ENCODE measurements at regions of chr6 and their contacts with region 1.

Region 1: DNA sequence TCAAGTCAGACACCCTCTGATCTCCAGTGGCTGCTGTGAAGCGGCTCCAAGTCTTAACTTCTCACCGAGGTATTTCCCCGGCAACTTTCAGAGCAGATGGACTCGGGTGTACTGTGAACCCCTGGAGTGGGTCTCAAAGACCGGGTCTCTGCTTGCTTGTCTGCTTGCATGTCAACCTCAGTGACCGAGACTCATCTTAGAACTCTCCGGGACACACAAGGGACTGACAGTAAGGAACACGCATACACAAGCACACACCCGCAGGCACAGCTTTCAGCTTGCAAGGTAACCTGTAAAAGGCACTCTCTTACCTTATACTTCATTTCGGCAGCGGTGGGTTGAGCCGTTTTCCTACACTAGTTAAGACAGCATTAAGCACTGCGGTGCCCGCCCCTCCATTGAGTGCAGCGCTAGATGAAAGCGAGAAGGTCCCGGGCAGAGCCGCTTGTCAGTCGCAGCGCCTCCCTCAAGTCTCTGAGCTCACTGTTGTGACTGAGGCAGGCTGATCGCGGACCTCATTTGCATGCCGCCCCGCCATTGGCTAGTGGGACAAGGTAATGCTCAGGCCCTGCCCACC is at the start of gene NEDD9:
- DNase-seq: peak; percentile 76 to 97 (median 90)
- ATAC-seq: peak; percentile 97
- H3K4me3 ChIP-seq: peak within 1 kb of the TSS; percentile 69
- H3K4me3 Mint-ChIP-seq: peak within 1 kb of the TSS; percentile 86 to 98 (median 94)
- H3K27ac ChIP-seq: peak within 1 kb of the TSS; percentile 76
- H3K27ac Mint-ChIP-seq: peak within 1 kb of the TSS; percentile 88 to 99 (median 98)
- H3K4me1 ChIP-seq: peaks cover 19 to 26% of the 10 kb centered on the region in 2 donors
- H3K4me1 Mint-ChIP-seq: peaks cover 32 to 78% (median 46%) of the 10 kb centered on the region in 7 donors
- H3K27me3 ChIP-seq: no peaks in the 10 kb centered on the region
- H3K27me3 Mint-ChIP-seq: no peaks in the 10 kb centered on the region
- total RNA-seq, gene NEDD9: 29.4 to 62.9 (median 40.2) TPM

Region 2: GRCh38 chr6:10694302-10695085 is 537.8 kb before region 1 on chr6 and contains the starts of genes C6orf52 and PAK1IP1:
- CTCF ChIA-PET with region 1: no interaction called
- POLR2A ChIA-PET with region 1: interaction called, 7 read pairs
- intact Hi-C with region 1: loop called (anchors 1 to 10 kb)
- DNase-seq: peak; percentile 77 to 97 (median 96)
- ATAC-seq: peak; percentile 95
- H3K4me3 ChIP-seq: peak within 1 kb of the TSS; percentile 99
- H3K4me3 Mint-ChIP-seq: peak within 1 kb of the TSS; percentile 88 to 98 (median 94)
- H3K27ac ChIP-seq: peak within 1 kb of the TSS; percentile 90
- H3K27ac Mint-ChIP-seq: peak within 1 kb of the TSS; percentile 99 to 100 (median 100)
- H3K4me1 ChIP-seq: peaks cover 13 to 18% of the 10 kb centered on the region in 2 donors
- H3K4me1 Mint-ChIP-seq: peaks cover 20 to 52% (median 49%) of the 10 kb centered on the region in 7 donors
- H3K27me3 ChIP-seq: no peaks in the 10 kb centered on the region
- H3K27me3 Mint-ChIP-seq: peaks cover 0 to 4% (median 0%) of the 10 kb centered on the region in 5 donors
- total RNA-seq, gene C6orf52: 1.2 to 1.9 TPM in 2 of 5 experiments, not detected in the others
- total RNA-seq, gene PAK1IP1: 5.2 to 15.2 (median 8.0) TPM

Region 3: GRCh38 chr6:11172501-11173332 is 59.6 kb before region 1 on chr6:
- CTCF ChIA-PET with region 1: no interaction called
- POLR2A ChIA-PET with region 1: no interaction called
- intact Hi-C with region 1: loop called (anchors 1 kb)
- DNase-seq: peak; percentile 45 to 82 (median 68)
- ATAC-seq: peak; percentile 79
- H3K4me3 ChIP-seq: peak overlapping the region; percentile 25
- H3K4me3 Mint-ChIP-seq: peak overlapping the region in 8 of 10 donors; percentile 6 to 64 (median 53)
- H3K27ac ChIP-seq: no peak overlapping the region
- H3K27ac Mint-ChIP-seq: peak overlapping the region in 2 of 9 donors; percentile 12 to 16
- H3K4me1 ChIP-seq: peaks cover 6 to 10% of the 10 kb centered on the region in 2 donors
- H3K4me1 Mint-ChIP-seq: peaks cover 2 to 14% (median 10%) of the 10 kb centered on the region in 7 donors
- H3K27me3 ChIP-seq: no peaks in the 10 kb centered on the region
- H3K27me3 Mint-ChIP-seq: no peaks in the 10 kb centered on the region

Region 4: DNA sequence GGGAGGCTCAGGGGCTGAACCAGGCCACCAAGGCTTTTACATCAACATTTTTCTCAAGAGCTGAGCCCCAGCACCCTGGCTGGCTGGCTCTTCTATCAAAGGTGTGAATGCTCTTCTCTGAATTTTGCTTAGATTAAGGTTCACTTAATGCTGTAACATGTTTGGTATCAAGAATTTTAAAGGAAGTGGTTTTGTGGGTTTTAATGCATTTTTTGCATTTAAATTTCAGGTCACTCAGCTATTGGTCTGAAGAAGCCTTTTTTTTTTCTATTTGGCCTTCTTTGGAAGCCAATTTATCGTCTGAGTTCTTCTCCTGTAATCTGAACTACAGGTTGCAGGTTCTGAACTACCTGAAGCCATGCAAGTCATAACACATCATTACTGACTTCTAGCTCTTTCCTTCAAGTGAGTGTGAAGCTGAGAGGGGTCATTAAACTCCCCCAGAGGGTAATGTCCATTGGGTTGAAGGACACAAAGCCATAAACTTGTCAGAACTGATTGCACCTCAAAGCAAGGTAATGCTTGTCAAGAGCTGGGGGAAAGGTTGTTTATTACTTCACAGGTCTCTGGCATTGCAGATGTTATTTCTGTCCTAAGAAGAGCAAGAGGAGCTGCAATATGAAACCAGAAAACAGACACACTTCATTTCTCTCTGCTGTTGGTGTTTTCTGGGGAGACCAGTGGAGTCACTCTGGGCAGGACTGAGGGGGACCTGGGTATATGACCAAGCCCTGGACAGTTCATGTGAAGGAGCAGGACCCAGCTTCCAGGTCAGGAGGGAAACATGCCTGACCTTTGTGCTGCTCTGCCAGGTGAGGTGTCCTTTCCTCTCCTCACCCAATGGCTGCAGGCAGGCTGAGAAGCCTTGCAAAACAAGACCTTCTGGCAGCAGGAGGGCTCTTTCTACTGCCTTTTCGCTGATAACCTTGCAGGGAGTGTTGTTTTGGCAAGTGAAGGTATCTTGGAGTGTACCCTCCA is 26.3 kb after region 1 on chr6:
- CTCF ChIA-PET with region 1: interaction called, 4 read pairs
- POLR2A ChIA-PET with region 1: interaction called, 4 read pairs
- intact Hi-C with region 1: loop called (anchors 1 kb)
- DNase-seq: peak in 5 of 9 donors; percentile 5 to 24 (median 12)
- ATAC-seq: peak; percentile 83
- H3K4me3 ChIP-seq: peak overlapping the region; percentile 11
- H3K4me3 Mint-ChIP-seq: peak overlapping the region in 8 of 10 donors; percentile 6 to 65 (median 28)
- H3K27ac ChIP-seq: peak overlapping the region; percentile 6
- H3K27ac Mint-ChIP-seq: peak overlapping the region in 8 of 9 donors; percentile 37 to 84 (median 68)
- H3K4me1 ChIP-seq: peaks cover 16 to 58% of the 10 kb centered on the region in 2 donors
- H3K4me1 Mint-ChIP-seq: peaks cover 32 to 59% (median 44%) of the 10 kb centered on the region in 7 donors
- H3K27me3 ChIP-seq: no peaks in the 10 kb centered on the region
- H3K27me3 Mint-ChIP-seq: no peaks in the 10 kb centered on the region

Region 5: GRCh38 chr6:11366183-11366933 is 134.1 kb after region 1 on chr6:
- CTCF ChIA-PET with region 1: no interaction called
- POLR2A ChIA-PET with region 1: no interaction called
- intact Hi-C with region 1: loop called in 1 of 2 experiments (anchors 2 kb)
- DNase-seq: peak in 1 of 9 donors; percentile 46
- ATAC-seq: peak; percentile 89
- H3K4me3 ChIP-seq: no peak overlapping the region
- H3K4me3 Mint-ChIP-seq: peak overlapping the region in 8 of 10 donors; percentile 9 to 73 (median 45)
- H3K27ac ChIP-seq: no peak overlapping the region
- H3K27ac Mint-ChIP-seq: peak overlapping the region in 7 of 9 donors; percentile 38 to 90 (median 56)
- H3K4me1 ChIP-seq: peaks cover 0 to 22% of the 10 kb centered on the region in 2 donors
- H3K4me1 Mint-ChIP-seq: peaks cover 50 to 87% (median 77%) of the 10 kb centered on the region in 7 donors
- H3K27me3 ChIP-seq: no peaks in the 10 kb centered on the region
- H3K27me3 Mint-ChIP-seq: no peaks in the 10 kb centered on the region

Region 6: DNA sequence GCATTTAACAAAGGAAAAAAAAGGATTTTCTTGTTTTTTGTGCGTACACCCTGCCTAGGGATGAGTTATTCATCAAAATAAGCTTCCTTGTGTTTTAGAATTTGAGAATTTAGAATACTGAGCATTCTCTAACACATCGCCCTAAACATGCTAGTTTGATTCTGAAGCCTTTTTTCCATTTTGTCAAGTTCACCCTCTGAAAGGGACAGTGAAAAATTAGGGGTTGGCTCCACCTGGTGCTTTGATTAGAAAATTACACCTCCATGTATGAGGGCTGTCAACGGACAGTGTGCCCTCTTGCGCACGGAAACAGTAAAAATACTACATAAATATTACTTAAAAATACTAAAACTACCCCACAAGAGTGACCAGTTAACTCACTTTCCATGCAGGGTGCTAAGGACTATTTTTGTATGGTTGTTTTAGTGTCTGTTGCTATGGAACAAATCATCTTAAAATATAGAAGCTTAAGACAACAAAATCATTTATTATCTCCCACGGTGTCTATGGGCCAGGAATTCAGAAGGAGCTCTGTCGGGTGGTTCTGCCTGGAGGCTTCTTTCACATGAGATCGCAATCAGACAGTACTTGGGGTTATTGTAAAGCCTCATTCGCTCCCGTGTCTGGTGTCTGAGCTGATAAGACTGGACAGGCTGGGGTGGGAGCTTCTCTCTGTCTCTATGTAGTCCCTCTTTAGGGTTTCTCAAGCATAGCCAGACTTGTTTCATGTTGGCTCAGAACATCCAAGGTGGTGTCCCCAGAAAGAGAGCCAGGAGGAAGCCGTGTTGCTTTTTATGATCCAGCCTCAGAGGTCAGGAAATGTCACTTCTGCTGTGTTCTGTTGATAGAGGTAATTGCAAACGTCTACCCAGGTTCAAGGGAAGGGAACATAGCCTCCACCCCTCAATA is 264.1 kb after region 1 on chr6:
- CTCF ChIA-PET with region 1: no interaction called
- POLR2A ChIA-PET with region 1: no interaction called
- intact Hi-C with region 1: loop called (anchors 1 to 5 kb)
- DNase-seq: peak; percentile 35 to 85 (median 78)
- ATAC-seq: peak; percentile 95
- H3K4me3 ChIP-seq: no peak overlapping the region
- H3K4me3 Mint-ChIP-seq: no peak overlapping the region
- H3K27ac ChIP-seq: no peak overlapping the region
- H3K27ac Mint-ChIP-seq: no peak overlapping the region
- H3K4me1 ChIP-seq: peaks cover 0 to 10% of the 10 kb centered on the region in 2 donors
- H3K4me1 Mint-ChIP-seq: peaks cover 0 to 3% (median 0%) of the 10 kb centered on the region in 7 donors
- H3K27me3 ChIP-seq: no peaks in the 10 kb centered on the region
- H3K27me3 Mint-ChIP-seq: no peaks in the 10 kb centered on the region

Measured in naive thymus-derived CD4-positive, alpha-beta T cell (primary cell).